IMR-90 (cell line): ENCODE measurements at regions of chr15 and their contacts with region 1.

Region 1: GRCh38 chr15:64355944-64356709 is at the start of gene CSNK1G1:
- DNase-seq: peak; percentile 98
- ATAC-seq: peak; percentile 98
- H3K4me3 ChIP-seq: peak within 1 kb of the TSS; percentile 62
- H3K27ac ChIP-seq: peak within 1 kb of the TSS; percentile 78
- H3K4me1 ChIP-seq: peaks cover 2% of the 10 kb centered on the region; the same call in 1 of the 2 replicates
- H3K27me3 ChIP-seq: no peaks in the 10 kb centered on the region
- CTCF ChIP-seq: peak; percentile 70
- POLR2A ChIP-seq: no peak; the same call in 1 of the 2 replicates
- RAD21 ChIP-seq: peak; percentile 71
- total RNA-seq, gene CSNK1G1: 26.7 and 29.4 TPM in 2 replicates

Region 2: DNA sequence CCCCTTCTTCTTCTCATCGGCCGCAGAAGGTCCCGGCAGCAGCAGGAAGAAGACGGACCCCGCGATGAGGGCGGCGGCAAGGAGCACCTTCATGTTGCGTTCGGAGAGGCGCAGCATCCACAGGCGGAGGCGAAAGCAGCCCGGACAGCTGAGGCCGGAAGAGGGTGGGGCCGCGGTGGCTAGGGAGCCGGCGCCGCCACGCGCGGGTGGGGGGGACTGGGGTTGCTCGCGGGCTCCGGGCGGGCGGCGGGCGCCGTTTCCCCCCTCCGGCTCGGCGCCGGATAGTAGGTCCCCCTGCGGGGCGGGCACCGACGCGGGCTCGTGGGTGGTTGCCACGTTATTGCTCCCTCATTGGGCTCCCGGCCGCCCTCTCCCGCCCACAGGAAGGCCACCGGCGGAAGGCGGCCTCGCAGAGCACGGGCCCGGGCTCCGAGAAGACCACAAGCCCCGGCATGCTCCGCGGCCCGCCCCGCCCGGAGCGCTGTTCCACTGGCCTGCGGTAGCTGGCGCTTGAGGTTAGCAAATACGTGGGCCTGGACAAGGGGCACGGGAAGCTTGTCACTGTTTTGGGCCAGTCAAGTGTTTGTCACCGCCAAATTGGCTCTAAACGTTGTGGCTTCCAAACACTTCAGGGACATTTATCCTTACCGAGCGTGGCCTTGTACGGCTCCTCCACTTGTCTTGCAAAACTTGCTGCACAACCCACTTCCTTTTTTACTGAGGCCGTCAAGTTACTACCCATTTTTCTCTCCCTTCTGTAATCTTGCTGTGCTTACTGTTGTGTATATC is 193.1 kb before region 1 on chr15 and contains the start of gene PPIB:
- CTCF ChIA-PET with region 1: no interaction called
- POLR2A ChIA-PET with region 1: no interaction called
- dilution Hi-C with region 1: no loop called
- in situ Hi-C with region 1: no loop called
- intact Hi-C with region 1: loop called (anchors 1 kb)
- DNase-seq: peak; percentile 97
- ATAC-seq: peak; percentile 93
- H3K4me3 ChIP-seq: peak within 1 kb of the TSS; percentile 92
- H3K27ac ChIP-seq: peak within 1 kb of the TSS; percentile 97
- H3K4me1 ChIP-seq: peaks cover 6% of the 10 kb centered on the region
- H3K27me3 ChIP-seq: no peaks in the 10 kb centered on the region
- CTCF ChIP-seq: peak; percentile 51
- POLR2A ChIP-seq: peak; percentile 98
- RAD21 ChIP-seq: peak; percentile 57
- total RNA-seq, gene PPIB: 1,601 and 1,682 TPM in 2 replicates

Region 3: GRCh38 chr15:64209680-64210334 is 146.3 kb before region 1 on chr15:
- CTCF ChIA-PET with region 1: no interaction called
- POLR2A ChIA-PET with region 1: no interaction called
- dilution Hi-C with region 1: no loop called
- in situ Hi-C with region 1: no loop called
- intact Hi-C with region 1: loop called (anchors 1 kb)
- DNase-seq: peak; percentile 64
- ATAC-seq: peak; percentile 70
- H3K4me3 ChIP-seq: no peak overlapping the region
- H3K27ac ChIP-seq: no peak overlapping the region
- H3K4me1 ChIP-seq: peaks cover 2% of the 10 kb centered on the region; the same call in 1 of the 2 replicates
- H3K27me3 ChIP-seq: no peaks in the 10 kb centered on the region
- CTCF ChIP-seq: peak; percentile 70
- POLR2A ChIP-seq: no peak
- RAD21 ChIP-seq: peak; percentile 69

Region 4: DNA sequence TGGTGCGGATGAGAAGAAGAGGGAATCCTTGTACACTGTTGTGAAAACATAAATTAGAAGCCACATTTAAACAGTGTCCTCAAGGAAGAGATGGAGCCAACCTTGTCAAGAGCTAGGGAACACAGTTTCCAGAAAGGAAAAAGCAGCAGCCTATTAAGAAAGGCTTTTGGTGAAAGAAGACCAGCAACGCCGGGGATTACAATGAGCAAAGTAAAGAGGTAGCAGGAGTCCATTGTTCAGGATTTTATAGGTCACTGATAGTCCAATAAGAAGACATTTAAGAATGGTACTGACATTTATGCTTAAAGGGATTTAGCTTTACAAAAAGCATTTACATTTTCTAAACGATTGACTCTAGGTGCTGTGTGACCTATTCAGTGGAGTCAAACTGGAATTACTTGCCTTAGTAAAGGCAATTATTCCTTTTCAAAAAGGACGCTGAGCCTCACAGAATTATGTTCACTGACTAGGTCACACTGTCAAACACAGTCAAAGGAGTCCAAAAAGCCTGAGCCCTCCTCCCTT is 40.9 kb before region 1 on chr15:
- CTCF ChIA-PET with region 1: no interaction called
- POLR2A ChIA-PET with region 1: no interaction called
- dilution Hi-C with region 1: no loop called
- in situ Hi-C with region 1: no loop called
- intact Hi-C with region 1: no loop called
- DNase-seq: no peak
- ATAC-seq: no peak
- H3K4me3 ChIP-seq: no peak overlapping the region
- H3K27ac ChIP-seq: no peak overlapping the region
- H3K4me1 ChIP-seq: peaks cover 2% of the 10 kb centered on the region
- H3K27me3 ChIP-seq: no peaks in the 10 kb centered on the region
- CTCF ChIP-seq: no peak
- POLR2A ChIP-seq: no peak
- RAD21 ChIP-seq: no peak

Region 5: GRCh38 chr15:64387562-64388168 is 31.5 kb after region 1 on chr15 and contains the start of gene TRIP4:
- CTCF ChIA-PET with region 1: no interaction called
- POLR2A ChIA-PET with region 1: no interaction called
- dilution Hi-C with region 1: no loop called
- in situ Hi-C with region 1: no loop called
- intact Hi-C with region 1: loop called (anchors 2 kb)
- DNase-seq: peak; percentile 97
- ATAC-seq: peak; percentile 100
- H3K4me3 ChIP-seq: peak within 1 kb of the TSS; percentile 77
- H3K27ac ChIP-seq: peak within 1 kb of the TSS; percentile 67
- H3K4me1 ChIP-seq: 0 out of 2 replicates have a peak, but pooled peaks cover 1% of the 10 kb centered on the region
- H3K27me3 ChIP-seq: no peaks in the 10 kb centered on the region
- CTCF ChIP-seq: no peak
- POLR2A ChIP-seq: peak; percentile 73
- RAD21 ChIP-seq: peak; percentile 39
- total RNA-seq, gene TRIP4: 13.1 and 13.9 TPM in 2 replicates

Region 6: GRCh38 chr15:64740311-64741170 is 384.4 kb after region 1 on chr15:
- CTCF ChIA-PET with region 1: no interaction called
- POLR2A ChIA-PET with region 1: no interaction called
- dilution Hi-C with region 1: no loop called
- in situ Hi-C with region 1: no loop called
- intact Hi-C with region 1: no loop called
- DNase-seq: peak; percentile 77
- ATAC-seq: peak; percentile 80
- H3K4me3 ChIP-seq: no peak overlapping the region
- H3K27ac ChIP-seq: no peak overlapping the region
- H3K4me1 ChIP-seq: peaks cover 8% of the 10 kb centered on the region; the same call in 1 of the 2 replicates
- H3K27me3 ChIP-seq: 0 out of 2 replicates have a peak, but pooled peaks cover under 1% of the 10 kb centered on the region
- CTCF ChIP-seq: peak; percentile 54
- POLR2A ChIP-seq: no peak
- RAD21 ChIP-seq: peak; percentile 65